ENCODE measurements at regions of chr10 and their contacts with region 1.

Region 1: GRCh38 chr10:35642027-35642792 is at the start of gene FZD8:
- DNase-seq: peak; percentile 92 to 93 (median 92)
- ATAC-seq: peak; percentile 97
- H3K4me3 ChIP-seq: peak within 1 kb of the TSS; percentile 64
- H3K27ac ChIP-seq: no peak within 1 kb of the TSS
- H3K4me1 ChIP-seq: peaks cover 6 to 40% of the 10 kb centered on the region in 2 experiments; a peak in 3 of 5 replicates
- H3K27me3 ChIP-seq: peaks cover 7 to 20% of the 10 kb centered on the region in 2 experiments; a peak in 4 of 5 replicates
- CTCF ChIP-seq: peak in 2 of 3 experiments; percentile 17 to 18; a peak in 1 of 6 replicates
- EP300 ChIP-seq: no peak
- POLR2A ChIP-seq: peak; percentile 62
- RAD21 ChIP-seq: no peak
- polyA plus RNA-seq, gene FZD8: 0.03 TPM in 1 of 2 experiments, not detected in the other

Region 2: GRCh38 chr10:35661236-35661635 is 19.0 kb after region 1 on chr10:
- CTCF ChIA-PET with region 1: no interaction called
- POLR2A ChIA-PET with region 1: no interaction called
- in situ Hi-C with region 1: no loop called
- intact Hi-C with region 1: no loop called
- DNase-seq: no peak
- ATAC-seq: no peak
- H3K4me3 ChIP-seq: no peak overlapping the region
- H3K27ac ChIP-seq: no peak overlapping the region
- H3K4me1 ChIP-seq: no peaks in the 10 kb centered on the region
- H3K27me3 ChIP-seq: no peaks in the 10 kb centered on the region
- CTCF ChIP-seq: no peak
- EP300 ChIP-seq: no peak
- POLR2A ChIP-seq: no peak
- RAD21 ChIP-seq: no peak

Region 3: DNA sequence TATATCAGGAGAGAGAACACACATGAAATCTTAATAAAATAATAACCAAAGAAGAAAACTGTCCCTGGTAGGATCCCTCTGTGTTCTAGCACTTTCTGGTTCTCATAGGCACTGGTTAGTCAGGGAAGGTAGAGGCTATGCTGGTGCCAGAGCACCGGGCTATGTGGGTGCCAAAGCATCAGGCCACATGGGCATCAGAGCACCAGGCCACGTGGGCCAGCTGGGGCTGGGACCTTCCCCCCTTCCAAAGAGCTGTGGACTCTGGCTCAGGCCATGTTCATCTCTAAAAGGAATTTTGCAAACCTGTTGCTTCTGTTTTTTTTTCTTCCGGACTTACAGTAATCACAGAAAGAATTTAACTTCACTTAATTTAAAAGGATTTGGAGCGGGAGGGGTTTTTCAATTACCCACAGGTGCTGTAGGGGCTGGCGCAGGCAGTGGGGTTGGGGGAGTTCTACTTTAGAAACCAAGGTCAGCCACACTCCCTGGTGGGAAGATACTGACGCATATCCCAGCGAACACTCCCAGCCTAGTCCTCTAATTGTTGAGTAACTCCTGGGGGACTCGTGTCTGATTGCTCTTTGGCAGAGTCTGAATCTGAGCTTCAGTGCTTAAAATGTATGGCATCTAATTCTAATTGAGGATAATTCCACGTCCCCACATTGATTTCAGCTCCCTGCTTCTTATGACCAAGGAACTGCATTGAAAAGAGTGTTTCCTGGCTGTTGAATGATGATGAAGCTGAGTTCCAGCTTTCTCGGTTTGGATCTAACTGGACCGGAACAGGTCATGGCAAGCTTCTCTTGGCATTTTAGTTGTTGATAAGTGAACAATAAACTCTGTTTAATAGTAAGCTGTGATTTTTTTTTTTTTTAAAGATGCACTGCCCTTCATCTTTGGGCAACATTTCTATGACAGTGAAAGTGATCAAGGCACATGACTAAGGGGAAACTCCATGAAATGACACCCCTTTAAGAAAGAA is 110.5 kb after region 1 on chr10:
- CTCF ChIA-PET with region 1: no interaction called
- POLR2A ChIA-PET with region 1: no interaction called
- in situ Hi-C with region 1: no loop called
- intact Hi-C with region 1: loop called (anchors 10 kb)
- DNase-seq: no peak
- ATAC-seq: no peak
- H3K4me3 ChIP-seq: no peak overlapping the region
- H3K27ac ChIP-seq: no peak overlapping the region
- H3K4me1 ChIP-seq: no peaks in the 10 kb centered on the region
- H3K27me3 ChIP-seq: no peaks in the 10 kb centered on the region
- CTCF ChIP-seq: no peak
- EP300 ChIP-seq: no peak
- POLR2A ChIP-seq: no peak
- RAD21 ChIP-seq: no peak

Region 4: GRCh38 chr10:36888929-36889573 is 1246.8 kb after region 1 on chr10:
- CTCF ChIA-PET with region 1: no interaction called
- POLR2A ChIA-PET with region 1: no interaction called
- in situ Hi-C with region 1: loop called (anchors 25 kb)
- intact Hi-C with region 1: no loop called
- DNase-seq: peak; percentile 13 to 65 (median 27)
- ATAC-seq: peak; percentile 81
- H3K4me3 ChIP-seq: no peak overlapping the region
- H3K27ac ChIP-seq: no peak overlapping the region
- H3K4me1 ChIP-seq: no peaks in the 10 kb centered on the region
- H3K27me3 ChIP-seq: no peaks in the 10 kb centered on the region
- CTCF ChIP-seq: peak; percentile 63 to 73 (median 72)
- EP300 ChIP-seq: no peak
- POLR2A ChIP-seq: no peak
- RAD21 ChIP-seq: peak; percentile 36 to 72